ENCODE measurements at regions of chr2 and their contacts with region 1.

Region 1: GRCh38 chr2:162574615-162575452 is 230.9 kb downstream of the GCA start:
- DNase-seq: peak; percentile 97
- ATAC-seq: peak; percentile 100
- H3K4me3 ChIP-seq: peak overlapping the region in 2 of 3 experiments; percentile 6 to 49; a peak in 2 of 6 replicates
- H3K27ac ChIP-seq: peak overlapping the region; percentile 85
- H3K4me1 ChIP-seq: peaks cover 61% of the 10 kb centered on the region
- H3K27me3 ChIP-seq: no peaks in the 10 kb centered on the region
- CTCF ChIP-seq: no peak
- EP300 ChIP-seq: peak in 1 of 2 experiments; percentile 95
- POLR2A ChIP-seq: peak; percentile 47 to 62; a peak in 3 of 4 replicates
- RAD21 ChIP-seq: peak; percentile 40; the same call in 1 of the 2 replicates

Region 2: GRCh38 chr2:162607915-162608314 is 33.1 kb after region 1 on chr2:
- CTCF ChIA-PET with region 1: no interaction called
- POLR2A ChIA-PET with region 1: interaction called, 3 read pairs
- in situ Hi-C with region 1: no loop called
- intact Hi-C with region 1: loop called (anchors 1 kb)
- DNase-seq: peak; percentile 65
- ATAC-seq: peak; percentile 100
- H3K4me3 ChIP-seq: no peak overlapping the region
- H3K27ac ChIP-seq: no peak overlapping the region
- H3K4me1 ChIP-seq: peaks cover 19% of the 10 kb centered on the region
- H3K27me3 ChIP-seq: no peaks in the 10 kb centered on the region
- CTCF ChIP-seq: no peak
- EP300 ChIP-seq: peak in 1 of 2 experiments; percentile 91; a peak in 1 of 4 replicates
- POLR2A ChIP-seq: no peak
- RAD21 ChIP-seq: no peak